H1 (cell line): ENCODE measurements at regions of chr12 and their contacts with region 1.

Region 1: GRCh38 chr12:2583091-2583497 is 211.7 kb upstream of the FKBP4 start:
- DNase-seq: peak; percentile 23 to 89
- H3K4me3 ChIP-seq: peak overlapping the region in 1 of 4 experiments; percentile 40; a peak in 1 of 8 replicates
- H3K27ac ChIP-seq: no peak overlapping the region
- H3K4me1 ChIP-seq: peaks cover 0 to 3% (median 2%) of the 10 kb centered on the region in 4 experiments; a peak in 5 of 7 replicates
- H3K27me3 ChIP-seq: peaks cover 0 to 9% (median 9%) of the 10 kb centered on the region in 4 experiments; a peak in 6 of 7 replicates
- CTCF ChIP-seq: peak; percentile 81 to 94 (median 89)
- EP300 ChIP-seq: no peak
- POLR2A ChIP-seq: no peak
- RAD21 ChIP-seq: peak; percentile 93 to 97

Region 2: DNA sequence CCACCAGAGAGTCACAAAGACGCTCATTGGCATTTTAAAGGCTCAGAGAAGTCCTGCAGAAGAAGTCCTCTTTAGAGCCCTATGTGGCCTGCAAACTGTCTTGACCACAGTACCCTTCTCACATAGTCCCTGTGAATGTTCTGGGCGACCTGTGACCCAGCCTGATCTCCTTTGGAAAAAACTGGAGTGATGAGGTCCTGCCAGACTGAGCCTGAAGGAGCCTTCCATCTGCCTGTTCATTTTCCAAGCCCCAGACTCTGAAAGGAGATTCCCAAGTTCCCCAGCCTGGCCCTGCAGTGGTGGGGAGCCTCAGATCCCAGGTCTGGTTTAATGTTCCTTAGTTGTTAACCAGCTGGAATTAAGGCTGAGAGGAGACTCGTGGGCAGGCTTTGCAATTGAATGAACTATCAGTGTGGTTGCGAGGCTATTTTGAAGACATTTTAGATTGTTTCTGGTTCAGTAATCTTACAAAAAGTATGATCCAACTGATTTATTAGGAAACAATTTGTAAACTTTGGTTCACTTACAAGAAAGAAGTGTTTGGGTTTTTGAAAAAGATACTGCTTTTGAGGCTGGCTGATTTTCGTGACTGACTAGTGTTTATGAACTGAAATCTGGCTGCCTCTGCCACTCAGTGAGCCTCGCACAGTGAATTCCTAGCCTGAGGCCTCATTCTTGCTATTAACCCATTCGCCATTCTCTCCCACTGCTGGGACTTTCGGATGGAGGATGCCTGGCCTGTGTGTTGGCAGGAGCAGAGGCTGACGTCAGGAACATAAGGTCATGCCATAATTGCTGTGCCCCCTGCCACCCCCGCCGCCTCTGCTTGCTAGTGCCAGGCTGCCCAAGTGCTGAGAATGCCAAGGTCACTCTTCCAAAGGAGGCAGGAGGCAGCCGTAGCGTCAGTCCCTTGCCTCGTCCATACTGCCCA is 281.3 kb before region 1 on chr12:
- CTCF ChIA-PET with region 1: interaction called, 24 read pairs
- POLR2A ChIA-PET with region 1: no interaction called
- DNase-seq: no peak
- H3K4me3 ChIP-seq: no peak overlapping the region
- H3K27ac ChIP-seq: no peak overlapping the region
- H3K4me1 ChIP-seq: peaks cover 3 to 11% (median 8%) of the 10 kb centered on the region in 4 experiments
- H3K27me3 ChIP-seq: no peaks in the 10 kb centered on the region
- CTCF ChIP-seq: no peak
- EP300 ChIP-seq: no peak
- POLR2A ChIP-seq: no peak
- RAD21 ChIP-seq: no peak

Region 3: GRCh38 chr12:2319742-2320506 is 263.2 kb before region 1 on chr12:
- CTCF ChIA-PET with region 1: interaction called, 10 read pairs
- POLR2A ChIA-PET with region 1: no interaction called
- DNase-seq: no peak
- H3K4me3 ChIP-seq: no peak overlapping the region
- H3K27ac ChIP-seq: no peak overlapping the region
- H3K4me1 ChIP-seq: peaks cover 0 to 2% (median 0%) of the 10 kb centered on the region in 4 experiments; a peak in 1 of 7 replicates
- H3K27me3 ChIP-seq: no peaks in the 10 kb centered on the region
- CTCF ChIP-seq: no peak
- EP300 ChIP-seq: no peak
- POLR2A ChIP-seq: no peak
- RAD21 ChIP-seq: no peak

Region 4: GRCh38 chr12:2520722-2521246 is 62.3 kb before region 1 on chr12:
- CTCF ChIA-PET with region 1: no interaction called
- POLR2A ChIA-PET with region 1: no interaction called
- DNase-seq: no peak
- H3K4me3 ChIP-seq: no peak overlapping the region
- H3K27ac ChIP-seq: no peak overlapping the region
- H3K4me1 ChIP-seq: no peaks in the 10 kb centered on the region
- H3K27me3 ChIP-seq: no peaks in the 10 kb centered on the region
- CTCF ChIP-seq: no peak
- EP300 ChIP-seq: no peak
- POLR2A ChIP-seq: no peak
- RAD21 ChIP-seq: no peak

Region 5: GRCh38 chr12:2570562-2570961 is 12.5 kb before region 1 on chr12:
- CTCF ChIA-PET with region 1: interaction called, 14 read pairs
- POLR2A ChIA-PET with region 1: interaction called, 3 read pairs
- DNase-seq: no peak
- H3K4me3 ChIP-seq: no peak overlapping the region
- H3K27ac ChIP-seq: no peak overlapping the region
- H3K4me1 ChIP-seq: no peaks in the 10 kb centered on the region
- H3K27me3 ChIP-seq: no peaks in the 10 kb centered on the region; a peak in 3 of 7 replicates
- CTCF ChIP-seq: no peak
- EP300 ChIP-seq: no peak
- POLR2A ChIP-seq: no peak
- RAD21 ChIP-seq: no peak

Region 6: DNA sequence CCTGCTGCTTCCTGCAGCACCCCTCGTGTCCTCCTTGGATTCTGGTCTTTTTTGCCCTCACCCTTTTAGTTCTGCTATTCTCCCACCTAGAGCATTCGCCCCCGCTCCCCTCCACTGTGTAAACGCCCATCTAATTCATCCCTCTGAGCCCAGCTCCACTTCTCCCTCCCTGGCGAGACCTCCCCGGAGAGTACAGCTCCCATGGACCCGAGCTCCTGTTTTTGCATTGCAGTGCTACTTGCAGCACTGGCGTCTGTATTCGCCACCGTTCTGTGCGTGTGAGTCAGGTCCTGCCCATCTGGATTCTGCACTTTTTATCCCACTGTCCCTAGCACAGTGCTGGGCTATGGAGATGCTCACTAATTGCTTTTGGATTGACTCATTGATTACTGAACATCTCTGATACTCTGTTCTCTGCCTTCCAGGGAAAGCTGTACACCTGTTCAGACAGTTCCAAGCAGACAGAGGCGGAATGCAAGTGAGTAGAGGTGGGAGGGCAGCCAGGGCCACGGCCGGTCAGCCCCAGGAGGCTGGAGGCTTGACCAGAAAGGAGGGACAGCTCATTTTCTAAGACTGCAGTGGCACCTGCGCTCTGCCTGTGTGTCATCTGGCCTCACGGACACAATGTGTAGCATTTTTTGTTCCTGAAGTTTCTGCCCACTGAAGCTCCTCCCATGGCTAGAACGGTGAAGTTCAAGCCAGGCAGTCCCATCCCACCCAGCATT is 23.3 kb after region 1 on chr12:
- CTCF ChIA-PET with region 1: interaction called, 11 read pairs
- POLR2A ChIA-PET with region 1: no interaction called
- DNase-seq: no peak
- H3K4me3 ChIP-seq: no peak overlapping the region
- H3K27ac ChIP-seq: no peak overlapping the region
- H3K4me1 ChIP-seq: peaks cover 0 to 5% (median 0%) of the 10 kb centered on the region in 4 experiments; a peak in 3 of 7 replicates
- H3K27me3 ChIP-seq: peaks cover 0 to 3% (median 0%) of the 10 kb centered on the region in 4 experiments; a peak in 1 of 7 replicates
- CTCF ChIP-seq: no peak
- EP300 ChIP-seq: no peak
- POLR2A ChIP-seq: no peak
- RAD21 ChIP-seq: no peak